Left cardiac atrium (tissue), 4 donors: ENCODE measurements at regions of chr9 and their contacts with region 1.

Region 1: GRCh38 chr9:105930011-105930627 is 235.8 kb downstream of the TMEM38B start:
- DNase-seq: peak; percentile 44
- ATAC-seq: peak; percentile 94 to 95

Region 2: DNA sequence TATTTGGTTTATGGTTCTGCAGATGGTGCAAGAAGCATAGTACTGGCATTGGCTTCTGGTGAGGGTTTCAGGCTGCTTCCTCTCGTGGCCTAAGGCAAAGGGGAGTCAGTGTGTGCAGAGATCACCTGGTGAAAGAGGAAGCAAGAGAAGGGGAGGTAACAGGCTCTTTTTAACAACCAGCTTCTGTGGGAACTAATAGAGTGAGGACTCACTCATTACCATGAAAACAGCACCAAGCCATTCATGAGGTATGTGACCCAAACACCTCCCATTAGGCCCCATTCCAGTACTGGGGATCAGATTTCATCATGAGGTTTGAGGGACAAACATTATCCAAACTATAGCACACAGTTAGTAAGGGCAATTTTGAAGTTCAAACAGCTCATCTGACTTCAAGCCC is 27.7 kb after region 1 on chr9:
- intact Hi-C with region 1: no loop called
- DNase-seq: no peak
- ATAC-seq: no peak

Region 3: GRCh38 chr9:105973951-105974351 is 43.8 kb after region 1 on chr9:
- intact Hi-C with region 1: no loop called
- DNase-seq: no peak
- ATAC-seq: peak; percentile 23 to 41

Region 4: DNA sequence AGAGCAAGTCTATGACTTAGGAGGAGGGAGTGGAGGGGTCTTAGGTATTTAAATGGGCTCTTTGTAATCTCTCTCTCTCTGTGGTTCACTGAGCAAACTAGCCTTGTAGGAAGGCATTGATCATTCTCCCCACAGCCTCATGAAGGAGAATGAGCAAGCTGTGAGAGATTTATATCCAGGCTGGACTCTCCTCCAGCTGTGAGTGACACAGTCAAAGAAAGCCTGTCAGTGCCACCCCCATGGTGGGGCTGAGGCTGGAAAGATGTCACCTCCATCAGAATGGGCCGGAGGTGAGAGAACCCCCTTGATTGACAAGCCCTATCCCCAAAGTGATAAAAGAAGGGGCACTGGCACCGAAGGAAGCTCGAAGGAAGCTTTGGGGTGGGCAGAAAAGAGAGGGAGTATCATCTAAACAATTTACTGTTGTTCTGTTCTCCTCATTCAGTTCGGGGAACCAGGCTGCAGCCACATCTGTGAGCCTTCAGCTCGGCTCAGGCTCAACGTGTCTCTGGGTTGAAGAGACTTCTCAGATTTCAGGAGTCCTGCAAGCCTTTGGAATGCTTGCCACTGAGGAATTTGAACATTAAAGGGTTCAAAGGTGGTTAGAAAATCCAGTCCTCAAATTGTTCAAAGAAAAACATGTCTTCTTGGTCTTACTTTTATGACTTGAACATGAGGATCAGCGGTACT is 394.6 kb after region 1 on chr9:
- intact Hi-C with region 1: no loop called
- DNase-seq: no peak
- ATAC-seq: no peak

Region 5: GRCh38 chr9:107059215-107059614 is 1129.1 kb after region 1 on chr9:
- intact Hi-C with region 1: loop called in 1 of 2 experiments (anchors 5 kb)
- DNase-seq: no peak
- ATAC-seq: no peak